ENCODE measurements at regions of chr3 and their contacts with region 1.

Region 1: DNA sequence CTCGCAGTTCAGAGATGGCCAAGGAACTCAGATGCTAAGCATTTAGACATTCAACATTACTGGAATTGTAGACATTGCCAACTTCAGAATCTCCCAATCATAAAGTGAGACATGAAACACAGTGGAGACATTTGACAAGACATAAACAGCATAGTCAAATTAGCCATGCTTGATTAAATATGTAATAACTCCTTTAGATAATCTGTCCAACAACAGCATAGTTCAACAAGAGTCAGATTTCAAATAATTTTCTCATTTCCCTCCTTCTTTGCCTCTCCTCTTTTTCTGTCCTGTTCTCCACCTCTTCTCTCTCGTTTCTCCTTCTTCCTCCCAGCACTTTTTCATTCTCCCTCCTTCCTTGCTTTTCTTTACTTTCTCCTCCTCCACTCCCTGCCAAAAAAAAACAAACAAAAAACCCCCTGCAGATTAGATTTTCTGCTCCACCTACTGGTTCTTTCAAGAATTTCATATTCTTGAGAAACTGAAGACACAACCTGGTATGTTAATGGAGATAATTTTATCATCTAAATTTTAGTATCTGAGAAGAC is 20.2 kb downstream of the CPOX start:
- DNase-seq: no peak
- H3K4me3 Mint-ChIP-seq: peak overlapping the region; percentile 44
- H3K27ac Mint-ChIP-seq: peak overlapping the region; percentile 75
- H3K4me1 Mint-ChIP-seq: peaks cover 60% of the 10 kb centered on the region
- H3K27me3 Mint-ChIP-seq: no peaks in the 10 kb centered on the region

Region 2: GRCh38 chr3:97438131-97438530 is 1135.1 kb before region 1 on chr3:
- CTCF ChIA-PET with region 1: no interaction called
- POLR2A ChIA-PET with region 1: no interaction called
- DNase-seq: no peak
- H3K4me3 Mint-ChIP-seq: no peak overlapping the region
- H3K27ac Mint-ChIP-seq: no peak overlapping the region
- H3K4me1 Mint-ChIP-seq: no peaks in the 10 kb centered on the region
- H3K27me3 Mint-ChIP-seq: no peaks in the 10 kb centered on the region

Region 3: GRCh38 chr3:97914390-97914789 is 658.9 kb before region 1 on chr3:
- CTCF ChIA-PET with region 1: no interaction called
- POLR2A ChIA-PET with region 1: no interaction called
- DNase-seq: no peak
- H3K4me3 Mint-ChIP-seq: no peak overlapping the region
- H3K27ac Mint-ChIP-seq: no peak overlapping the region
- H3K4me1 Mint-ChIP-seq: peaks cover 40% of the 10 kb centered on the region
- H3K27me3 Mint-ChIP-seq: no peaks in the 10 kb centered on the region

Region 4: GRCh38 chr3:98291332-98291957 is 281.8 kb before region 1 on chr3:
- CTCF ChIA-PET with region 1: no interaction called
- POLR2A ChIA-PET with region 1: no interaction called
- DNase-seq: no peak
- H3K4me3 Mint-ChIP-seq: no peak overlapping the region
- H3K27ac Mint-ChIP-seq: no peak overlapping the region
- H3K4me1 Mint-ChIP-seq: no peaks in the 10 kb centered on the region
- H3K27me3 Mint-ChIP-seq: peaks cover 16% of the 10 kb centered on the region

Region 5: GRCh38 chr3:98513091-98513511 is 60.2 kb before region 1 on chr3:
- CTCF ChIA-PET with region 1: interaction called, 5 read pairs
- POLR2A ChIA-PET with region 1: interaction called, 169 read pairs
- DNase-seq: no peak
- H3K4me3 Mint-ChIP-seq: no peak overlapping the region
- H3K27ac Mint-ChIP-seq: no peak overlapping the region
- H3K4me1 Mint-ChIP-seq: peaks cover 75% of the 10 kb centered on the region
- H3K27me3 Mint-ChIP-seq: no peaks in the 10 kb centered on the region

Region 6: DNA sequence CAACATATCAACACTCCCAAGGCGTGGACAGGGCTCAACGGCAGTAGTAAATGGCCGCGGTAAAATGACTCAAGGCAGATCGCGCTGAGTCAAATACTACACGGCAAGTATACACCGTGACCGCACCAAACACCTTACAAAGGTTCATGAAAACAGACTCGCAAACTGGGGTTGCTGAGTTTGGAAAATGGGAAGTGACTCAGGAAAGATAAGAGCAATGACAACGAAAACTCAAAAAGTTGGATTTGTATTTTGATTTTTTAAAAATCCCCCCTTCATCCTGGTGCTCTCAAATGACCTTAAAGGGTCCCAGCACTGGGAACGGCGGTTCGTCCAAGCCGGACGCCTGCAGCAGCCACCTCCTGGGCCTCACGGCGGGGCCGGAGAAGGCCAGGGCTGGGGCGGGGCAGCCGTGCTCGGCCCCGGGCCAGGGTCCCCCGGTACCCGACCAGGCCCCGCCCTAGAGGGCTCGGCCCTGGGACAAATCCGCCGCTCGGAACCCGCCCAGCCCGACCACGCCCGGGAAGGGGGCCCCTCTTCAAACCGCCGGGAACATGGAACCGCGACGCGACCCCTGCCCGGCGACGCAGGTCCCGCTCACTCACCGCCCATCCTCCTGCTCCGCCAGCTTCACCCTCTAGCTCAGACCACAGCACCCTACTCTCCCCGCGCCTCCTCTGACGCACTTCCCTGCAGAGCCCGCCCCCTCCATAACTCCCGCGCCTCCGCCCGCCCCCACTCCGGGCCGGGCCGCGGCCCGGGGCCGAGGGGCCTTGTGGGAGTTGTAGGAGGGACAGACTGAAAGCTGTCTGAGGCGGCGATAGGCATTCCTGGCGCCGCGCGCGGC is 50.8 kb before region 1 on chr3 and contains the start of gene CLDND1:
- CTCF ChIA-PET with region 1: interaction called, 38 read pairs
- POLR2A ChIA-PET with region 1: interaction called, 169 read pairs
- DNase-seq: peak; percentile 98
- H3K4me3 Mint-ChIP-seq: peak within 1 kb of the TSS; percentile 98
- H3K27ac Mint-ChIP-seq: peak within 1 kb of the TSS; percentile 92
- H3K4me1 Mint-ChIP-seq: peaks cover 74% of the 10 kb centered on the region
- H3K27me3 Mint-ChIP-seq: no peaks in the 10 kb centered on the region
- total RNA-seq, gene CLDND1: 673 to 683 TPM

Region 7: DNA sequence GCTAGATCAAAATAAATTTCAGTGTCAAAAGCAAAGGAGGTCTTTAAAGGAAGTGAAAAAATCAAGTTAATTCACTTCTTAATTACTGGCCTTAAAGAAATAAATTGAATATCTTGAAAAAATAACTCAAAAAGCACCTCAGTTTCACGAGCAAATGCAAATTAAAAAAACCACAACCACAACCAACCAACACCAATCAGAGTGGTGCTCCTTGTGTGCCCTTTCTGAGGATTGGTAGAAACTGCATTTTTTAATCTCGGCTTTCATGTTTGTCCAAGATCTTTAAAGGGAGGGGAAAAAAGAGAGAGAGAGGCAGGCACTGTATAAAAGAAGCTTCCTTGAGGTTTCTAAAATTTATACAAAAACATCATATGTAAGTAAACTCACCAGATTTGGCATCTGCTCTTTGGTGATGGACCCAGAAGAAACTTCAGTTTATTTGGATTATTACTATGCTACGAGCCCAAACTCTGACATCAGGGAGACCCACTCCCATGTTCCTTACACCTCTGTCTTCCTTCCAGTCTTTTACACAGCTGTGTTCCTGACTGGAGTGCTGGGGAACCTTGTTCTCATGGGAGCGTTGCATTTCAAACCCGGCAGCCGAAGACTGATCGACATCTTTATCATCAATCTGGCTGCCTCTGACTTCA is 41.5 kb before region 1 on chr3 and contains the start of gene GPR15:
- CTCF ChIA-PET with region 1: interaction called, 11 read pairs
- POLR2A ChIA-PET with region 1: interaction called, 931 read pairs
- DNase-seq: no peak
- H3K4me3 Mint-ChIP-seq: peak within 1 kb of the TSS; percentile 81
- H3K27ac Mint-ChIP-seq: peak within 1 kb of the TSS; percentile 84
- H3K4me1 Mint-ChIP-seq: peaks cover 64% of the 10 kb centered on the region
- H3K27me3 Mint-ChIP-seq: no peaks in the 10 kb centered on the region
- total RNA-seq, gene GPR15: 111 TPM

Region 8: DNA sequence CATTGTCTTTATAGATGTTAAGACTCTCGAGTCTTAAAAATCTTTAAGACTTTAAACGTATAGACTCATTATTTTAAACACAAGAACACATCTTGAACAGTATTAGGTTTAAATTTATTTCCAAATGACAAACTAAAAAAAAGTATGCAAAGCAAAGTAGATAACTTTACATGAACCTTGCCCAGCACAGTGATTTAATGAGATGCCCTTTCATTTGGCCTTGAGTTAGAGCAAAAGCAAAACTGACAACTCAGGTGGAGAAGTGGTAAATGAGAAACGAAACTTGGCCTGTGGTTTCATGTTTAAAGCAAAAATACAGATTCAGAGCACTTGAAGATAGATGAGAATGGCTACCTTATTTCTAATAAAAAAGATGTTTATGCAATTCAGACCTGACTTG is 32.9 kb before region 1 on chr3:
- CTCF ChIA-PET with region 1: interaction called, 11 read pairs
- POLR2A ChIA-PET with region 1: interaction called, 931 read pairs
- DNase-seq: no peak
- H3K4me3 Mint-ChIP-seq: peak overlapping the region; percentile 23
- H3K27ac Mint-ChIP-seq: peak overlapping the region; percentile 80
- H3K4me1 Mint-ChIP-seq: peaks cover 71% of the 10 kb centered on the region
- H3K27me3 Mint-ChIP-seq: no peaks in the 10 kb centered on the region

Region 9: DNA sequence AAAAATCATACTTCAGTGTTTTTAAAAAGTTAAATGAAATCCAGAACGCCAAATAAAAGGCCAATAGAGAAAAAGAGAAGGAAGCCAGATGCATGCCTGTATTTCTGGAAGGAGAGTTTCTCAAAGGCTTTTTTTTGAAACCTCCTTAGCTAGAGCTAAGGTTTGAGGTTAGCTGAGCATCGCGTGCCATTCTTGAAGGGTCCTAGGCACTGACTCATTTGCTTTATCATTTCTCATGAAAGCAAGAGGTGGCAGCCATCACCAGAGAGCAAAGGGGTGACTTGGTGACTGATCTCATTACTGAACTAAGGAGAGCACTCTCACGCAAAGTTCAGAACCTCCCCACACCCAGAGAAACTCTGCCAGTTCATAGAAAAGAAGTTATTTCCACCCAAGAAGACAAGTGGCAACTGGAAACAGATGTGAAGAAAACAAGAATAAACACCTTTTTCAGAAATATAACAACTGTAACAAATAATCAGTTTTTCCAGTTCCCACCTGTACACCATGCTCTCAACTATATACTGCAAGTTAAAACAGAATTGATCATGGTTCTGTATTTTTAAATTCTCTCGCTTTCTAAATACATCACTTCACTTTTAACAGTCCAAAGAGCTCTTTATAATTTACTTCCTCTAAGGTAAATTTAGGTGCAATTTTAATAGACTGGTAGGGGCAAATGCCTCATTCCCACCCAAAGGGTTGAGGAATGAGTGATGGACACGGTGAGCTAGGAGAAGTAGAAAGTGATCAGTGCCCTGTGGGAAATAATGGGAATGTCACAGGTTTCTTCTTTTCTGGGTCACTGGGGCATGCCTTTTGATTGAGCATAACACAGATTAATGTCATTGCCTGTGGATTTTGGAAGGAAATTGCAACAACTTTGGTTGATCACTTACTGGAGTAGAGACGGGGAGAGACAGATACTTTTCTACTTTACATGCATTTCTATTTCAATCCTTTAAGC is 16.8 kb before region 1 on chr3:
- CTCF ChIA-PET with region 1: interaction called, 20 read pairs
- POLR2A ChIA-PET with region 1: interaction called, 349 read pairs
- DNase-seq: peak; percentile 88
- H3K4me3 Mint-ChIP-seq: peak overlapping the region; percentile 82
- H3K27ac Mint-ChIP-seq: peak overlapping the region; percentile 100
- H3K4me1 Mint-ChIP-seq: peaks cover 87% of the 10 kb centered on the region
- H3K27me3 Mint-ChIP-seq: no peaks in the 10 kb centered on the region

Region 10: DNA sequence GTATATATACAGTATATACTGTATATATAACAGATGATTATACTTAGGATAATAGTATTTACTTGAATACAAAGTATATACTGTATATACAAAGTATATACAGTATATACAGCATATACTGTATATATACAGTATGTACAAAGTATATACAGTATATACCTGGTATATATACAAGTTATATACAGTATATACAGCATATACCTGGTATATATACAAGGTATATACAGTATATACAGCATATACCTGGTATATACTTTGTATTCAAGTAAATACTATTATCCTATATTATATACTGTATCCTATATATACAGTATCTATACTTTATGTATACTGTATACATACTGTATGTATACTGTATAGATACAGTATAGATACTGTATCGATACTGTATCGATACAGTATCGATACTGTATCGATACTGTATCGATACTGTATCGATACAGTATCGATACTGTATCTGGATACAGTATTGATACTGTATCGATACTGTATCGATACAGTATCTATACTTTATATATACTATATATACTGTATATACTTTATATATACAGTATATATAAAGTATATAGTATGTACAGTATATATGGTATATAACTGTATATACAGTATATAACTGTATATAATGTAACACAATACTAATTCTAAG is 34.9 kb after region 1 on chr3:
- CTCF ChIA-PET with region 1: no interaction called
- POLR2A ChIA-PET with region 1: no interaction called
- DNase-seq: no peak
- H3K4me3 Mint-ChIP-seq: no peak overlapping the region
- H3K27ac Mint-ChIP-seq: no peak overlapping the region
- H3K4me1 Mint-ChIP-seq: no peaks in the 10 kb centered on the region
- H3K27me3 Mint-ChIP-seq: peaks cover 27% of the 10 kb centered on the region